ENCODE measurements at regions of chr4 and their contacts with region 1.

Region 1: GRCh38 chr4:24488399-24489164 is 95.8 kb downstream of the DHX15 start:
- DNase-seq: no peak
- H3K4me3 ChIP-seq: no peak overlapping the region
- H3K27me3 ChIP-seq: peaks cover 7% of the 10 kb centered on the region
- CTCF ChIP-seq: peak; percentile 93

Region 2: DNA sequence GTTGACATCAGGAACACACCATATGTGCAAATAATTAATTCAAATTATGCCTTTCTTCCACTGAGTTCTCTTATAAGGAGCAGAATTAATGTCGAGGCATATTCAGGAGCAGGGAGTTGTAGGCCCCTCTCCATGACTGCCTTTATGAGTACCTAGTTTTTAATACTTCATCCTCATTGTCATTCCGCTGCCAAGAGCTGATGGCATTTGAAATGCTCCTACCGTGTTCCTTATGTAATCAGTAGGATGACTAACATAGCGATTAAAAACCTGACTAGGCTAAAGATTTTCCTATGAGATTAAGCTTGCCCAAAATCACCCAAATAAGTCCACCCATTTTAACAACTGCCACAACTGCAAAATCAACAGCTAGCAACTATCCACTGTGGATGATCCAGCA is 124.8 kb before region 1 on chr4:
- CTCF ChIA-PET with region 1: no interaction called
- POLR2A ChIA-PET with region 1: no interaction called
- DNase-seq: no peak
- H3K4me3 ChIP-seq: no peak overlapping the region
- H3K27me3 ChIP-seq: no peaks in the 10 kb centered on the region
- CTCF ChIP-seq: no peak

Region 3: DNA sequence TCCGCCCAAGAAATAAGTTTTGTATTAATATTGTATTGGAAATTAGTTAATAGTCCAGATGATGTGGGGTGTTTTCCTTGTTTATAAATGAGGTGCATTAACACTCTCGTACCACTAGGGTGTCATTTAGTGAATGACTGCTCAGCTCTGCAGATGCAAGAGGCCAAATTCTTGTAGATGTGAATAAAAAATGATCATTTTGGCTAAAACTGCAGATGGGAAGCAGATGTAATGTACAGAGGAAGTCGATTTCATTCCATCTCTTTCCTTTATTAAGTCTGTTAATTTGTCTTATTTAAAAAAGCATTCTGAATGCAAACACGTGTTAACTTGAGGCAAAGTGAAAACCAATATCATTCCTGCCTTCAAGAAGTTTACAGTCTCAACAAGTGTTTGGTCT is 12.3 kb before region 1 on chr4:
- CTCF ChIA-PET with region 1: interaction called, 66 read pairs
- POLR2A ChIA-PET with region 1: no interaction called
- DNase-seq: no peak
- H3K4me3 ChIP-seq: no peak overlapping the region
- H3K27me3 ChIP-seq: peaks cover 9% of the 10 kb centered on the region
- CTCF ChIP-seq: peak; percentile 61

Region 4: DNA sequence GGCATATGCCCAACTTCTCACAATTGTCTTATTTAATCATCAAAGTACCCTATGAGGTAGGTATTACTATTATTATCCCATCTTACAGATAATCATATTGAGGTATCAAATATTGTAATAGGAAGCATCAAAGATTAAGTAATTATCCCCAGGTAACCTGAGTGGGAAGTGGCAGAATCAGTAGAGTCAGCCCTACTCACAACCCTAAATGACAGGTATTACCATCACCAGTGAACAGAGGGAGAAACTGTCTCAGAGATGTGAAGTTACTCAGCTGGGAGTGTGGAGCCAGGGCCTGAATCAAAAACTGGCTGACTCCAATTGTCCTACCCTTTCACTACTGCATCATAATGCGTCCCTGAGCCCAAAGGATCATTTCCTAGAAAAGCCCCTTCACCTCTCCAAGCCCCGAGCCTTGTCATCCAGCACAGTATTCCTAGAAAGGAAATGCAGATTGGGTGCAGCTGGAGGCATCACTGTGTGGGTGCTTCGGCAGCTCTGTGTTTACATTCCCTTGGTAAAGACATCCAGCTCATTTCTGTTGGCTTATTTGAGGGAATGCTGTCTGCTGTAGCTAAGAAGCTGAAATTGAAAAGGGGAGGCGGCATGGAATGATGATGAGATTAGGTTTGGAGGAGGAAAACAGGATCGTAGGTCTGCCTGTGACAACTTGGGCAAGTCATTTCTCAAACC is 22.9 kb after region 1 on chr4:
- CTCF ChIA-PET with region 1: interaction called, 11 read pairs
- POLR2A ChIA-PET with region 1: no interaction called
- DNase-seq: no peak
- H3K4me3 ChIP-seq: no peak overlapping the region
- H3K27me3 ChIP-seq: no peaks in the 10 kb centered on the region
- CTCF ChIP-seq: no peak

Region 5: DNA sequence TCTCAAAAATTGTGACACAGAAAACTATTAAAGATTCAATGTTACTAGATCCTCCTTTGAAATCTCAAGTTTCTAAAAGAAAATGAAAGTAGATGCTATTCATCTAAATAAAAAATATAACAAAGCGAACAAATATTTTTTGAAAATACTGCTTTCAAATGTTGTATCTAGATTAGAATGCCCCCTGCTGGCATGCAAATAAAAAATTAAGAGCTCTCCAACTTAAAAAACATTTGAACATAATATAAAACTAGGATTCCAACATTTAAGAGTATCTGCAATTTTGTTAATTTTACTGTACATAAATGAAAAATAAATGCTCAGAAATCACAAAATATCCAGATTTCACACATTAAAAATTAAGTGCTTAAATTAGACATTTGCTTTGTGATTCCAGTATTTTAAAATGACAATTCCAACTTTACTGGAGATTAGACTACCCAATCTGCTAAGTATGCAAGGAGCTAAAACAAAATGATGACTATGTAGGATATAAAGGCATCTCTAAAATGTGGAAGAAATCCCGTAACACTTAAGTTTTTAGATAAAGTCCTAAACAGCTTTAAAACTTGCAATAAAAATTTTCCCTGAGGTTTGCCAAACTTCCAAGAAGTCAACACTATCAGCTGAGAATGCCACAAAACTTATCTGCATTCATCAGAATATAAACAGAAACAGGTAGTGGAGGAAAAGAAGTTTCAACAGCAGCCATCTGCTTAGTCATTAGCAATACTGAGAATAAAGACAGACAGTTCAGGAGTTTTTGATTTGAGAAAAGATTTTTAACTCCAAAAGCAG is 63.1 kb after region 1 on chr4:
- CTCF ChIA-PET with region 1: interaction called, 15 read pairs
- POLR2A ChIA-PET with region 1: no interaction called
- DNase-seq: peak; percentile 24
- H3K4me3 ChIP-seq: no peak overlapping the region
- H3K27me3 ChIP-seq: no peaks in the 10 kb centered on the region
- CTCF ChIP-seq: peak; percentile 35; the same call in 1 of the 2 replicates

Region 6: DNA sequence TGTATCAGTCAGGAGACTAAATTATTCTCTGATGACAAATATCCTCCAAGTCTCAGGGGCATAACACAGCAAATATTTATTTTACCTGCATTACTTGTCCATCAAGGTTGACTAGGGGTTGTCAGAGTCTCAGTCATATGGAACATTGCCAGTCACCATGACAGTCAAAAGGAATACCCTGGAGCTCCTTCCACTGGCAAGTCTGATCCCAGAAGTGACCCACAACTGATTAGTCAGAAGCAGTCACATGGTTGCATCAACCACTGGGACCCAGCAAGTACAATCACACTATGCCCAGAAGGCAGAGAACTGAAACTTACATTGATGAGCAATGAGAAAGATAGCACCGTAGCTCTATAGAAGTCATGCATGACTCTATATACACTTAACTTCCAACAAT is 264.9 kb after region 1 on chr4:
- CTCF ChIA-PET with region 1: no interaction called
- POLR2A ChIA-PET with region 1: no interaction called
- DNase-seq: no peak
- H3K4me3 ChIP-seq: no peak overlapping the region
- H3K27me3 ChIP-seq: no peaks in the 10 kb centered on the region
- CTCF ChIP-seq: no peak

Region 7: GRCh38 chr4:24794916-24795665 is 306.5 kb after region 1 on chr4 and contains the start of gene SOD3:
- CTCF ChIA-PET with region 1: interaction called, 11 read pairs
- POLR2A ChIA-PET with region 1: no interaction called
- DNase-seq: peak; percentile 69
- H3K4me3 ChIP-seq: peak within 1 kb of the TSS; percentile 35
- H3K27me3 ChIP-seq: 0 out of 2 replicates have a peak, but pooled peaks cover 1% of the 10 kb centered on the region
- CTCF ChIP-seq: no peak
- polyA plus RNA-seq, gene SOD3: 14.9 and 25.7 TPM in 2 replicates

Region 8: GRCh38 chr4:24980064-24980690 is 491.6 kb after region 1 on chr4:
- CTCF ChIA-PET with region 1: interaction called, 25 read pairs
- POLR2A ChIA-PET with region 1: no interaction called
- DNase-seq: no peak
- H3K4me3 ChIP-seq: no peak overlapping the region
- H3K27me3 ChIP-seq: peaks cover 9% of the 10 kb centered on the region
- CTCF ChIP-seq: peak; percentile 89

Region 9: GRCh38 chr4:24988776-24989175 is 500.2 kb after region 1 on chr4:
- CTCF ChIA-PET with region 1: interaction called, 25 read pairs
- POLR2A ChIA-PET with region 1: no interaction called
- DNase-seq: no peak
- H3K4me3 ChIP-seq: no peak overlapping the region
- H3K27me3 ChIP-seq: no peaks in the 10 kb centered on the region; the same call in 1 of the 2 replicates
- CTCF ChIP-seq: peak; percentile 69

Measured in BJ (cell line).